Activated B cell treated with CpG ODN at 0.5 μM for 24 hours (primary cell): ENCODE measurements at regions of chr1 and their contacts with region 1.

Region 1: DNA sequence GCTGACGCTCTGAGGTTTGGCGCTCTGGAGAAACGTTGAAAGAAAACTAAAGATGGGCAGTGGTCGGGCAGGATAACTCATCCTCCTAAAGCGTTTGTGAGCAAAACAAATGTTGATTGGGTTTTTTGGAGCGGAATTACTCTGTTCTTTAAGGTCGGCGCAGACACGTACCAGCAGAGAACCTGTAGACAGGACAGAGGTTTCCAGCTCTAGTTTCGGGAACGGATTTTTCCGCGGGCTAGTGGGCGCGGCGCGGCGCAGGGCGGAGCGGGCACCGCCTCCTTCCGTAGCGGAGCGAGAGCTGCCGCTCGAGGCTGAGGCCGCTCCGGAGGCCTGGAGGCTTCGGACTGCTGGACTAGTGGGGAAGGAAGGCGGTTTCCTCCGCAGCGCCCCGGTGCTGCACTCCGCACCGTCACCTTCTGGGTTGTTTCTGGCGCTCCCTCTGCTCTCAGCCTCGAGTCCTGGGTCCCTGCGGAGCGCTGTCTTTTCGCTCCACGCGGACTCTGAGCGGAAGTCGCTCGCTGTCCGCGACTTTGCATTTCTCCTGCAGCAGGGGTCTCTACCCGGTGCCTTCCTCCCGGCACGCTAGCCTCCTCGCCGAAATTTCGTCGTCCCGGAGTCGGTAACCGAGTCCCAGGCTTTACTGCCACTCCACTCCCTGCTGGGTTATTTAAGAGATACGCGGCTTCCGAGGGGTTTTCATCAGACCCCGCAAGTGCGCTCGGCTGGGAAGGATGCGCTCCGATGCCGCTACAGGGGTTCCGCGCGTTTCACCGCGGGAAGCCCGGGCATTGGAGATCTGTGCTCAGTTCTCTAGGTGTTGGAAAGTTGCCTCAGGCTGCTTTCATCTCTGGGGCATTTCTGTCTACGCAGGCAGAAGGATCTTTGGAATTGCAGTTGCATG is 7.0 kb downstream of the FOXD2 start:
- DNase-seq: peak; percentile 34
- ATAC-seq: no peak
- H3K4me3 Mint-ChIP-seq: peak overlapping the region; percentile 64
- H3K27ac Mint-ChIP-seq: peak overlapping the region; percentile 70
- H3K4me1 Mint-ChIP-seq: peaks cover 20% of the 10 kb centered on the region
- H3K27me3 Mint-ChIP-seq: peaks cover 39% of the 10 kb centered on the region
- CTCF ChIP-seq: no peak

Region 2: DNA sequence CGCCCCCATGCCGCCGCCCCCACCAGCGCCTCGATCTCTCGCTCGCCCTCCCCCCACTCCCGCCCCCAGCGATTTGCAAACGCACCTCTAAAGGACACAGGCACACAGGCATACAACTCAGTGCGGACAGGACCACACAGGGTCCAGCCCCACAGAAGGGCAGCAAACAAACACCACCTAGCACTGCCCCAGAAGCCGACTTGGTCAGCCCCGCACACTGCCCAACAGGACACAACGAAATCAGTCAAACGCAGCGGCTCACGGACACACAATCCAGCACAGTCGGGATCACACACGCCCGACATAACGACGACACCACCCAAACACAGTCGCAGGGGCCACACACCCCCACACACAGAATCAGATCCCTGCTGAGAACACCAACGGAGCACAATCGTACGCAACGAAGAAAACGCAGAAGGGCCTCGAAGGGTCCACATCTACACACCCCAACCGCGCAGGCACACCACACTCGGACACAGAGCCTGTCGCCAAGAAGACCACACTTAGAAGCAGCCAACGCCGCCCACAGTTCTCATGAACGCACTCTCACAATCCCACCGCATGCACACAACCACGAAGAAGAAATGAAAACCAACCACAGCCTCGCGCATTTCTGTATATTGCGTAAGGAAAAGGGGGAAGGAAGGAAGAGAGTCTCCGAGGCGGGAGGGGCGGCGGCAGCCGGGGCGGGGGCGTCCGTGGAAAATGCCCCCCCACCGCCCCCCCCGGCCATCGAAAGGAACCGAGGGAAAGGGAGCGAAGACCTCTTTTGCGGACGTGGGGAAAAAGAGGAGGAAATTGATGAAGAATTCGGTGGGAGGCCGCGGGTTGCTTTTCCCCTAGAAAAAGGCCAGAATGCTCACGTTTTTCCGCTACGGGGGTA is 213.3 kb before region 1 on chr1:
- CTCF ChIA-PET with region 1: no interaction called
- POLR2A ChIA-PET with region 1: no interaction called
- intact Hi-C with region 1: loop called (anchors 2 kb)
- DNase-seq: peak; percentile 29
- ATAC-seq: no peak
- H3K4me3 Mint-ChIP-seq: peak overlapping the region; percentile 79
- H3K27ac Mint-ChIP-seq: peak overlapping the region; percentile 24
- H3K4me1 Mint-ChIP-seq: peaks cover 33% of the 10 kb centered on the region
- H3K27me3 Mint-ChIP-seq: peaks cover 74% of the 10 kb centered on the region
- CTCF ChIP-seq: no peak

Region 3: DNA sequence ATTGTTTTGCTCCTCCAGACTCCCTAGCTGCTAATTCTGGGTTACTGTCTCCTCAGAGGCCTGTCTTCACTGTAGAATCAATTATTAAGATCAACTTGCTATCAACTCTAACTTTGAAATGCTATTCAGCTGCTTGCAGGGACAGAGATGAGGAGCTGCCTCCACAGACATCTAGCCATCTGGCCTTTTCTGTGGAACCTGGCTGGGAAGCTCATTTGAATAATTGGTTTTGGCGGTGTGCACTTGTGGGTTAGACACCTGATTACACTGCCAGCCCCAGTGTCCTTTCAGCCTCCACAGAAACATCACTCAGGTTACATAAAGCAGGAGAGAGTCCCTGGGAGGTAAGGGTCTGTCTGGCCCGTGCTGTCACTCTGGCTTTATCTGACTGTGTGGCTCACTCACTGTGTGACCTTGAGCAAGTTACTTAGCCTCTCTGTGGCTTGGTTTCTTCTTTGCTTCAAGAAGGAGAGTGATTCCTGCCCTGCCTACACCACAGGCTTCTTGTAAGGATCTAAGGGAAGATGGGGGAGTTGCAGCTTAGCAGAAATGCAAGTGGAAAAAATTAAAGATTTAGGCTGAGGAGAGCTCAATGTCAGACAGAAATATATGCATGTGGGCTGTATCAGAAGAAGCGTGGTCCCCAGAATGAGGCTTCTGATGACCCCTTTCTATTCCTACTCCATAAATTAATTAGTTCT is 1200.2 kb after region 1 on chr1:
- CTCF ChIA-PET with region 1: no interaction called
- POLR2A ChIA-PET with region 1: no interaction called
- intact Hi-C with region 1: no loop called
- DNase-seq: no peak
- ATAC-seq: no peak
- H3K4me3 Mint-ChIP-seq: no peak overlapping the region
- H3K27ac Mint-ChIP-seq: no peak overlapping the region
- H3K4me1 Mint-ChIP-seq: no peaks in the 10 kb centered on the region
- H3K27me3 Mint-ChIP-seq: no peaks in the 10 kb centered on the region
- CTCF ChIP-seq: no peak